IMR-90 (cell line): ENCODE measurements at regions of chr2 and their contacts with region 1.

Region 1: GRCh38 chr2:164992818-164993217 is 37.5 kb upstream of the SLC38A11 start:
- DNase-seq: peak; percentile 89
- ATAC-seq: peak; percentile 55
- H3K4me3 ChIP-seq: no peak overlapping the region
- H3K27ac ChIP-seq: no peak overlapping the region
- H3K4me1 ChIP-seq: peaks cover 8% of the 10 kb centered on the region
- H3K27me3 ChIP-seq: no peaks in the 10 kb centered on the region
- CTCF ChIP-seq: peak; percentile 68
- POLR2A ChIP-seq: no peak
- RAD21 ChIP-seq: peak; percentile 61

Region 2: GRCh38 chr2:164737612-164738081 is 255.2 kb before region 1 on chr2:
- CTCF ChIA-PET with region 1: no interaction called
- POLR2A ChIA-PET with region 1: no interaction called
- dilution Hi-C with region 1: no loop called
- in situ Hi-C with region 1: no loop called
- intact Hi-C with region 1: loop called (anchors 1 kb)
- DNase-seq: peak; percentile 52
- ATAC-seq: peak; percentile 83
- H3K4me3 ChIP-seq: no peak overlapping the region
- H3K27ac ChIP-seq: no peak overlapping the region
- H3K4me1 ChIP-seq: peaks cover 2% of the 10 kb centered on the region
- H3K27me3 ChIP-seq: no peaks in the 10 kb centered on the region; the same call in none of the 2 replicates
- CTCF ChIP-seq: peak; percentile 75
- POLR2A ChIP-seq: no peak
- RAD21 ChIP-seq: peak; percentile 78

Region 3: GRCh38 chr2:164917296-164917903 is 75.4 kb before region 1 on chr2:
- CTCF ChIA-PET with region 1: no interaction called
- POLR2A ChIA-PET with region 1: no interaction called
- dilution Hi-C with region 1: no loop called
- in situ Hi-C with region 1: no loop called
- intact Hi-C with region 1: loop called (anchors 5 kb)
- DNase-seq: peak; percentile 36
- ATAC-seq: no peak
- H3K4me3 ChIP-seq: no peak overlapping the region
- H3K27ac ChIP-seq: no peak overlapping the region
- H3K4me1 ChIP-seq: peaks cover 5% of the 10 kb centered on the region
- H3K27me3 ChIP-seq: no peaks in the 10 kb centered on the region
- CTCF ChIP-seq: peak; percentile 48
- POLR2A ChIP-seq: no peak
- RAD21 ChIP-seq: peak; percentile 50

Region 4: DNA sequence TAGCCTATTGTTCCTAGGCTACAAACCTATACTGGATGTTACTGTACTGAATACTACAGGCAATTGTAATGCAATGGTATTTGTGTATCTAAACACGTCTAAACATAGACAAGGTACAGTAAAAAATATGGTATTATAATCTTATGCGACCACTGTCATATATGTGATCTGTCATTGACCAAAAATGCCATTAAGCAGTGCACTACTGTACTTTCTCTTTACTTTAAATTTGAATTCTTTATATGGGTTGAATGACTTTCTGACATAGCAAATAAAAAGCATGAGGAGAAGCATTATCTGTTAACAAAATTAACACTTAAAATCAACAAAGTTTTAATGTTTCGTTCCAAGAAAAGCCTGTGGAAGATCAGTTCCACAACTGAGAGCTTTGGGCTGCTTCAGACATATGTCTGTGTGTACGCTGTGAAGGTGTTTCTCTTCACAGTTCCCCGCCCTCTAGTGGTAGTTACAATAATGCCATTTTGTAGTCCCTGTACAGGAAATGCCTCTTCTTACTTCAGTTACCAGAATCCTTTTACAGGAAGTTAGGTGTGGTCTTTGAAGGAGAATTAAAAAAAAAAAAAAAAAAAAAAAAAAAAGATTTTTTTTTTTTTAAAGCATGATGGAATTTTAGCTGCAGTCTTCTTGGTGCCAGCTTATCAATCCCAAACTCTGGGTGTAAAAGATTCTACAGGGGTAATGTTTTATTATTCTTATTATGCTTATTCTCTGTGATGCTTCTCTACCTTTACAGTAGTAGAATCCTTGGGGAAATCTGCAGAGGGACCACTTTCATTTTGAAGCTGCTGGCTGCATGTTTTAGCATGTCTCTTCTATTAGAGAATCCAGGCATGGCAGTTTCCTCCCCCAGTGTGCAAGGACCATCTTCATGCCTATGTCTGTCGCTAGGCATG is 300.9 kb after region 1 on chr2:
- CTCF ChIA-PET with region 1: no interaction called
- POLR2A ChIA-PET with region 1: no interaction called
- dilution Hi-C with region 1: no loop called
- in situ Hi-C with region 1: no loop called
- intact Hi-C with region 1: loop called (anchors 1 kb)
- DNase-seq: peak; percentile 87
- ATAC-seq: peak; percentile 100
- H3K4me3 ChIP-seq: peak overlapping the region; percentile 40
- H3K27ac ChIP-seq: no peak overlapping the region
- H3K4me1 ChIP-seq: no peaks in the 10 kb centered on the region
- H3K27me3 ChIP-seq: no peaks in the 10 kb centered on the region
- CTCF ChIP-seq: peak; percentile 82
- POLR2A ChIP-seq: no peak
- RAD21 ChIP-seq: peak; percentile 47

Region 5: GRCh38 chr2:166180951-166181812 is 1188.4 kb after region 1 on chr2:
- CTCF ChIA-PET with region 1: interaction called, 11 read pairs
- POLR2A ChIA-PET with region 1: no interaction called
- dilution Hi-C with region 1: no loop called
- in situ Hi-C with region 1: no loop called
- intact Hi-C with region 1: no loop called
- DNase-seq: peak; percentile 56
- ATAC-seq: peak; percentile 88
- H3K4me3 ChIP-seq: no peak overlapping the region
- H3K27ac ChIP-seq: no peak overlapping the region
- H3K4me1 ChIP-seq: no peaks in the 10 kb centered on the region
- H3K27me3 ChIP-seq: no peaks in the 10 kb centered on the region
- CTCF ChIP-seq: peak; percentile 66
- POLR2A ChIP-seq: no peak
- RAD21 ChIP-seq: peak; percentile 58